ENCODE measurements at regions of chr1 and their contacts with region 1.

Region 1: GRCh38 chr1:68600049-68600661 is 103.3 kb upstream of the DEPDC1 start:
- DNase-seq: peak; percentile 1
- CTCF ChIP-seq: peak; percentile 53

Region 2: DNA sequence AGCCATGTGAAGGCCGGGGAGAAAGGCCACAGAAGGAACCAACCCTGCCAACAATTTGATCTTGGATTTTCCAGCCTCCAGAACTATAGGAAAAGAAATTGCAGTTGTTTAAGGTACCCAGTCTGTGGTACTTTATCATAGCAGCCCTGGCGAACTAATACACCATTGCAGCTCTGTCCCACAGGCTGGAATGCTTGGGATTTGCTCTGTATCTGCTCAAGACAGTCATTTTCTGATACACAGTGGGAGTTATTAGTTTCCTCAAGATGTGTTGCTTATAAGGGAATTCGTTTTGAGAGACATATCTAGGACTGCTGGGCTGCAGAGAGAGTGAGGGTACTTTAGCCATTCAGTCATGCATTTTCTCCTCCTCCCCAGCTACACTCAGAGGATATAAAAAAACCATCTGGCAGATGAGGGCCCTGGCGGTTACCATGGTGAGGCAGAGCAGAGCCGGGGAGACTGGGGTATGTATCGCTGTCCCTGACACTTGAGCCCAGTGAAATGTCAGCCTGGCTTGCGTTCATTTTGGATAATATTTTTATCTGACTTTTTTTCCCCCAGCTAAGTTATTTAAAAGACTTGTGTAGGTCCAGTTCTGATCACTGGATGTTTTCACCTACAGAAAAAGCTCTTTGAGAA is 654.3 kb before region 1 on chr1:
- in situ Hi-C with region 1: no loop called
- DNase-seq: no peak
- CTCF ChIP-seq: no peak

Region 3: GRCh38 chr1:68827261-68827660 is 227.1 kb after region 1 on chr1:
- in situ Hi-C with region 1: no loop called
- DNase-seq: no peak
- CTCF ChIP-seq: no peak

Region 4: GRCh38 chr1:68889471-68889870 is 289.3 kb after region 1 on chr1:
- in situ Hi-C with region 1: no loop called
- DNase-seq: no peak
- CTCF ChIP-seq: no peak

Region 5: GRCh38 chr1:68916221-68916902 is 316.2 kb after region 1 on chr1:
- in situ Hi-C with region 1: no loop called
- DNase-seq: no peak
- CTCF ChIP-seq: no peak

Region 6: GRCh38 chr1:69737527-69738185 is 1137.5 kb after region 1 on chr1:
- in situ Hi-C with region 1: loop called (anchors 25 kb)
- DNase-seq: peak; percentile 8
- CTCF ChIP-seq: no peak